CD8-positive, alpha-beta T cell (primary cell): ENCODE measurements at regions of chr4 and their contacts with region 1.

Region 1: DNA sequence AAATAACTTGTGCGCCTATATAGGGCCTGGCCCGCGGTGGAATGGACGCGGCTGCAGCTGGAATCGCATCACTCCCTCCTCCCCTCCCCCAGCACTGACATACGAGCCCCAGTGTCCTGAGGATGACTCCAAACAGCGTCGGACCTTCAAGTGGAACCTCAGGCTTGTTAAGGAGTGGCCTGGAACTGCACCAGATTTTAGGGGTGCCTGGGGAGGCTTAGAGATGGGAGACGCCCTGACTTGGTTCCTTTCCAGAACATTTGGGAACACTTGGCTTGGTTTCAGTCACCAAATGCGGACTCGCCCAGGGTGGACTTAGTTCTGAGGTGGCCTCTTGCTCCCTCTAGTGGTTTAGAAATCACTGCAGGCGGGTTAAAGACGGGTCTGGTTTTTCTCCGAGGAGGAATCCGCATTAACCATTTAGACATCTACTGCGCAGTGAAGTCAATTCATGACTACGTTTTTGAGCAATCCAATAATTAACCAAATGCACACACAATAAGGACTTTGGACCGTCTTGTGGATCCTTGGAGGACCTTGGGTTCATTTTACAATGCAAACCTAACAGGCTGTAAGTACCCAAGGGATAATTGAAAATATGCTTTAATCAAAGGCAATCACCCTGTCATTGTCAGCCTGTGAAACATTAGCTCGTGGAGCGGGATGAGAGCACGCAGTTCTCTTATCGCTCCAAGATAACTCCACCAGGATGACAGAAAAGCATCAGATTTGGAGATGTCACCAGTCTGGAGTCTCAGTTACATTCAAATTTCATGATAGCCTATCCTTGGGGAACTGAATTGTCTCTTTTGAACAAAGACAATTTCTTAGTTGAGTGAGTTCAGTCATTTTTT is 11.2 kb upstream of the PDGFRA start:
- DNase-seq: peak; percentile 23 to 75 (median 60)
- ATAC-seq: peak; percentile 66
- H3K4me3 ChIP-seq: no peak overlapping the region
- H3K4me3 Mint-ChIP-seq: peak overlapping the region; percentile 39
- H3K27ac ChIP-seq: no peak overlapping the region
- H3K27ac Mint-ChIP-seq: no peak overlapping the region
- H3K4me1 ChIP-seq: peaks cover 5% of the 10 kb centered on the region
- H3K4me1 Mint-ChIP-seq: peaks cover 4% of the 10 kb centered on the region
- H3K27me3 ChIP-seq: peaks cover 3 to 5% of the 10 kb centered on the region in 2 experiments
- H3K27me3 Mint-ChIP-seq: peaks cover 35% of the 10 kb centered on the region
- CTCF ChIP-seq: peak; percentile 87

Region 2: GRCh38 chr4:52376132-52376704 is 1841.7 kb before region 1 on chr4:
- CTCF ChIA-PET with region 1: no interaction called
- POLR2A ChIA-PET with region 1: no interaction called
- intact Hi-C with region 1: loop called in 1 of 2 experiments (anchors 5 kb)
- DNase-seq: peak in 2 of 9 experiments; percentile 33 to 39
- ATAC-seq: no peak
- H3K4me3 ChIP-seq: no peak overlapping the region
- H3K4me3 Mint-ChIP-seq: no peak overlapping the region
- H3K27ac ChIP-seq: no peak overlapping the region
- H3K27ac Mint-ChIP-seq: no peak overlapping the region
- H3K4me1 ChIP-seq: no peaks in the 10 kb centered on the region
- H3K4me1 Mint-ChIP-seq: no peaks in the 10 kb centered on the region
- H3K27me3 ChIP-seq: no peaks in the 10 kb centered on the region
- H3K27me3 Mint-ChIP-seq: peaks cover 7% of the 10 kb centered on the region
- CTCF ChIP-seq: peak; percentile 71

Region 3: DNA sequence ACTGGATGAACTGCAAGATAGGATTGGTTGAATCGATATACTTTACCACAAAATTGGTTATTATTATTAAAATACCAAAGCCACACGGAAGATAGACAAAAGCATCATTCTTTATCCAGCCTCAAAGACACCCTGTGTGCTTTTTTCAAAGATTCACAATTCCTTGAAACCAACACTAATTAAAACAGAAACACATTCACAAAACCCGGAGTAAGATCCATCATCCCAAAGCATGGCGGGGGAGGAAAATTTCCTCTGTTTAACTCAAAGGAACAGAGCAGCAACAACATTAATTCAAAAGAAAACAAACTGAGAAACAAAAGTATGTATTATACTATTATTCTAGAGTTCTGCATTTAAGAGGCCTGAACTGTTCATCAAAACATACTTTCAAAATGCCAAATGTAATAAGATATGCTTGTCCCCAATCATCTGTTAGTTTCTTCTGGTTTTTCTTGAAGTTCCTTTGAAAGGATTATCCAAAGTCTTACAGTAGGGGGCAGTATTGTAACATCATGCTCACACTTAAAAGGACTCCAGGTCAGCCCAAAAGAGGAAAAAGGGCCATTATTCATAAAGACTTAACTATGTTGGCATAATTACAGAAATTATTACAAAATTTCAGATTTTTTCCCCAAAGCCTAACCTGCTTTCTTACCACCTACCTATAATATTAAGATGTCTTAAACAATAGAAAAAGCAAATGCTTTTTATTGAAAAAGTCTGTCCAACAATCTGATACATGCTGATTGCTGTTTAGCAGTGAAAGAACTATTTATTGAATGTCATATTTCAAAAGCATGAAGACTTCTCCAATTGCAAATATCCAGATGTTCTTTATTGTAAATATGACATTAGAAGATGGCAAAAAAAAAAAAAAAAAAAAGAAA is 1020.7 kb before region 1 on chr4:
- CTCF ChIA-PET with region 1: interaction called, 3 read pairs
- POLR2A ChIA-PET with region 1: no interaction called
- intact Hi-C with region 1: loop called (anchors 1 kb)
- DNase-seq: peak in 2 of 9 experiments; percentile 62 to 69
- ATAC-seq: no peak
- H3K4me3 ChIP-seq: no peak overlapping the region
- H3K4me3 Mint-ChIP-seq: no peak overlapping the region
- H3K27ac ChIP-seq: no peak overlapping the region
- H3K27ac Mint-ChIP-seq: no peak overlapping the region
- H3K4me1 ChIP-seq: no peaks in the 10 kb centered on the region
- H3K4me1 Mint-ChIP-seq: no peaks in the 10 kb centered on the region
- H3K27me3 ChIP-seq: no peaks in the 10 kb centered on the region
- H3K27me3 Mint-ChIP-seq: no peaks in the 10 kb centered on the region
- CTCF ChIP-seq: peak; percentile 79

Region 4: DNA sequence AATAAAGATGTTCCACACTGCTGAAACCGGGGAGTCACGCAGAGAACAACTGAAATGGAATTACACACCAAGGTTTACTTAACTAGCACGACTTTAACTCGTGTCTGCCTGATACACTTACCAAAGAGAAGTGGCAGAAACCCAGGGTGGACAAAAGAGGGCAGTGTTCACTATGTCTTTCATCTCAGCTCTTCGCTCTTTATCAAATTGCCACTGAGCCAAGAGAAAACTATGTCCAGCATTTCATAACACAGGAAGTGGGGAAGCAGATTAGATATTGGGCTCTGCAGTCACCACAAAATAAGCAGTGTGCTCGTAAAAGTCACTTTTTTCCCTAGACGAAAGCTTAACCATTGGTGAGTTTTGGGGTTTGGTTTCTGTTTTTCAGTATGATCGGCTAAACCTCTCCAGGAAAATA is 309.2 kb before region 1 on chr4:
- CTCF ChIA-PET with region 1: interaction called, 19 read pairs
- POLR2A ChIA-PET with region 1: no interaction called
- intact Hi-C with region 1: no loop called
- DNase-seq: peak in 2 of 9 experiments; percentile 31 to 48
- ATAC-seq: no peak
- H3K4me3 ChIP-seq: no peak overlapping the region
- H3K4me3 Mint-ChIP-seq: no peak overlapping the region
- H3K27ac ChIP-seq: no peak overlapping the region
- H3K27ac Mint-ChIP-seq: no peak overlapping the region
- H3K4me1 ChIP-seq: peaks cover 7% of the 10 kb centered on the region
- H3K4me1 Mint-ChIP-seq: peaks cover 13% of the 10 kb centered on the region
- H3K27me3 ChIP-seq: peaks cover 0 to 8% of the 10 kb centered on the region in 2 experiments
- H3K27me3 Mint-ChIP-seq: peaks cover 47% of the 10 kb centered on the region
- CTCF ChIP-seq: no peak

Region 5: GRCh38 chr4:53920116-53920515 is 297.8 kb before region 1 on chr4:
- CTCF ChIA-PET with region 1: interaction called, 11 read pairs
- POLR2A ChIA-PET with region 1: no interaction called
- intact Hi-C with region 1: no loop called
- DNase-seq: no peak
- ATAC-seq: no peak
- H3K4me3 ChIP-seq: no peak overlapping the region
- H3K4me3 Mint-ChIP-seq: no peak overlapping the region
- H3K27ac ChIP-seq: no peak overlapping the region
- H3K27ac Mint-ChIP-seq: no peak overlapping the region
- H3K4me1 ChIP-seq: no peaks in the 10 kb centered on the region
- H3K4me1 Mint-ChIP-seq: no peaks in the 10 kb centered on the region
- H3K27me3 ChIP-seq: no peaks in the 10 kb centered on the region
- H3K27me3 Mint-ChIP-seq: peaks cover 11% of the 10 kb centered on the region
- CTCF ChIP-seq: no peak

Region 6: DNA sequence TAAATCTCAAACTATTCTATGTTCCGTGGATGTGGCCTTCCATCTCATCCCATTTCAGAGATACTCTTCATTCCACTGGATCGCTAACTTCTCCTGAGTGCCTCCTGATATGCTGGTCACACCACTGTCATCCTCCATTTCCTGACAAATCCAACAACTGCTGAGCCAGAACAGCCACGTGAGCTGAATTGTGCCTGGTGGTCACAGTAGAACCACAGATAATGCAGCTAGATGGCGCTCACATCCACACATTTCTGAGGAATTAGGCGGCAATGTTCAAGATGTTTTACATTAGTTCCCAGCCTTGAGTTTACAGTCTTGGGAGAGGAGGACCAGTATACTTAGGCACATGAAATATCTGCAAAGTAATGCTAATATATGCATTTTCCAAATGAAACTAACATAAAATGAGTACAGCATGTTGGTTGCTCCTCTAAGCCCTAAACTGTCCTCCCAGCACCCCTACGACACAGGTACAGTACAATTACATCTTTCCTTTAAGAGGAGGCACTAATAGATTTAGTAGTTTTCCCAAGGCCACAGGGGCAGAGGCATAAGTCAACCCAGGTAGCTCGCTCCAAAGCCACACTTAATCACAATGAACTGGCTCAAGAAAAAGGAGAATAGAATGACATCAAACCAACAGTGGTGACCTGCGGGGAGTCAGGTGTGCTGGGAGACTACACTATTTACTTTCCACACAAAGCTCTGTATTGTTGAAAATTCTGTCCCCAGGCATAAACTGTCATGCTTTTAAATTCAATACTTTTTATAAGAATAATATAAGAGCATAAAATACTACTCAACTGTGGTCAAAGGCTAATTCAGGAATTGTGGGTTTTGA is 287.7 kb before region 1 on chr4:
- CTCF ChIA-PET with region 1: interaction called, 201 read pairs
- POLR2A ChIA-PET with region 1: no interaction called
- intact Hi-C with region 1: loop called (anchors 1 kb)
- DNase-seq: peak; percentile 26 to 75 (median 60)
- ATAC-seq: peak; percentile 55
- H3K4me3 ChIP-seq: no peak overlapping the region
- H3K4me3 Mint-ChIP-seq: no peak overlapping the region
- H3K27ac ChIP-seq: no peak overlapping the region
- H3K27ac Mint-ChIP-seq: no peak overlapping the region
- H3K4me1 ChIP-seq: no peaks in the 10 kb centered on the region
- H3K4me1 Mint-ChIP-seq: no peaks in the 10 kb centered on the region
- H3K27me3 ChIP-seq: peaks cover 0 to 4% of the 10 kb centered on the region in 2 experiments
- H3K27me3 Mint-ChIP-seq: peaks cover 10% of the 10 kb centered on the region
- CTCF ChIP-seq: peak; percentile 75

Region 7: GRCh38 chr4:53935780-53936179 is 282.1 kb before region 1 on chr4:
- CTCF ChIA-PET with region 1: interaction called, 201 read pairs
- POLR2A ChIA-PET with region 1: no interaction called
- intact Hi-C with region 1: loop called (anchors 1 kb)
- DNase-seq: no peak
- ATAC-seq: no peak
- H3K4me3 ChIP-seq: no peak overlapping the region
- H3K4me3 Mint-ChIP-seq: no peak overlapping the region
- H3K27ac ChIP-seq: no peak overlapping the region
- H3K27ac Mint-ChIP-seq: no peak overlapping the region
- H3K4me1 ChIP-seq: no peaks in the 10 kb centered on the region
- H3K4me1 Mint-ChIP-seq: no peaks in the 10 kb centered on the region
- H3K27me3 ChIP-seq: peaks cover 0 to 4% of the 10 kb centered on the region in 2 experiments
- H3K27me3 Mint-ChIP-seq: peaks cover 9% of the 10 kb centered on the region
- CTCF ChIP-seq: no peak